PC-3 (cell line): ENCODE measurements at regions of chr6 and their contacts with region 1.

Region 1: GRCh38 chr6:113858480-113859348 is 1.6 kb downstream of the MARCKS start:
- DNase-seq: peak; percentile 87
- ATAC-seq: peak; percentile 72
- H3K4me3 ChIP-seq: peak overlapping the region; percentile 100
- H3K27ac ChIP-seq: peak overlapping the region; percentile 96
- H3K4me1 ChIP-seq: peaks cover 9% of the 10 kb centered on the region
- H3K27me3 ChIP-seq: no peaks in the 10 kb centered on the region
- CTCF ChIP-seq: peak; percentile 75

Region 2: DNA sequence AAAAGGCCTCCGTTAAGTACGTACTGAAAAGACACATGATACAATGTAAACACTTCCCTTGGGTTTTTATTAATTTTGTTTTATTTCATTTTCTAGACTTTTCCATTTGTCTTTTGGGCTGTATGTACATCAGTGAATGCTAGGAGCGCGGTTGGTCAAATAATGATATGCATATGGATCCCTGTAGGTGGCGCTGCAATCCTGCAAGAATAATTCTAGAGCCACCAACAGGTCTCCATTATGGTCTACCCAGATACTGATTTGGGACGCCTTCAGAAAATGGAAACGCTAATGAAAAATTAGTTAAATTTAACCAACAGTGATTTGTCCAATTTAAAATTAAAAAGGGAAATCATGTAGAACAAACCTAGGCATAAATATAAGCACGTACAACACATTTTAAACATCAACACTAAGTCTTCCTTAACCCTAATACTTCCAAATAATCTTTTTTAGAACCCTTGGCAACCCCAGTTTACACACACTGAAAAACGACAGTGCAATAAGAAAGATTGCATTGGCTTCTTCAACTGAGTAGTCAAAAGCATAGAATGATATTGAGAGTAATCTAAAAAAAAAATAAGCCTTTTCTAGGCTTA is 1078.1 kb before region 1 on chr6:
- CTCF ChIA-PET with region 1: no interaction called
- POLR2A ChIA-PET with region 1: no interaction called
- intact Hi-C with region 1: loop called (anchors 1 kb)
- DNase-seq: peak; percentile 79
- ATAC-seq: peak; percentile 85
- H3K4me3 ChIP-seq: no peak overlapping the region
- H3K27ac ChIP-seq: no peak overlapping the region
- H3K4me1 ChIP-seq: no peaks in the 10 kb centered on the region
- H3K27me3 ChIP-seq: no peaks in the 10 kb centered on the region
- CTCF ChIP-seq: peak; percentile 79

Region 3: GRCh38 chr6:113047148-113047547 is 811.6 kb before region 1 on chr6:
- CTCF ChIA-PET with region 1: no interaction called
- POLR2A ChIA-PET with region 1: no interaction called
- intact Hi-C with region 1: loop called (anchors 2 kb)
- DNase-seq: peak; percentile 79
- ATAC-seq: peak; percentile 90
- H3K4me3 ChIP-seq: no peak overlapping the region
- H3K27ac ChIP-seq: peak overlapping the region; percentile 83
- H3K4me1 ChIP-seq: peaks cover 44% of the 10 kb centered on the region
- H3K27me3 ChIP-seq: no peaks in the 10 kb centered on the region
- CTCF ChIP-seq: no peak

Region 4: GRCh38 chr6:113122060-113122459 is 736.7 kb before region 1 on chr6:
- CTCF ChIA-PET with region 1: interaction called, 3 read pairs
- POLR2A ChIA-PET with region 1: no interaction called
- intact Hi-C with region 1: loop called (anchors 5 kb)
- DNase-seq: peak; percentile 88
- ATAC-seq: peak; percentile 61
- H3K4me3 ChIP-seq: peak overlapping the region; percentile 2; the same call in 1 of the 2 replicates
- H3K27ac ChIP-seq: peak overlapping the region; percentile 66
- H3K4me1 ChIP-seq: peaks cover 33% of the 10 kb centered on the region
- H3K27me3 ChIP-seq: no peaks in the 10 kb centered on the region
- CTCF ChIP-seq: peak; percentile 44; the same call in 1 of the 2 replicates

Region 5: DNA sequence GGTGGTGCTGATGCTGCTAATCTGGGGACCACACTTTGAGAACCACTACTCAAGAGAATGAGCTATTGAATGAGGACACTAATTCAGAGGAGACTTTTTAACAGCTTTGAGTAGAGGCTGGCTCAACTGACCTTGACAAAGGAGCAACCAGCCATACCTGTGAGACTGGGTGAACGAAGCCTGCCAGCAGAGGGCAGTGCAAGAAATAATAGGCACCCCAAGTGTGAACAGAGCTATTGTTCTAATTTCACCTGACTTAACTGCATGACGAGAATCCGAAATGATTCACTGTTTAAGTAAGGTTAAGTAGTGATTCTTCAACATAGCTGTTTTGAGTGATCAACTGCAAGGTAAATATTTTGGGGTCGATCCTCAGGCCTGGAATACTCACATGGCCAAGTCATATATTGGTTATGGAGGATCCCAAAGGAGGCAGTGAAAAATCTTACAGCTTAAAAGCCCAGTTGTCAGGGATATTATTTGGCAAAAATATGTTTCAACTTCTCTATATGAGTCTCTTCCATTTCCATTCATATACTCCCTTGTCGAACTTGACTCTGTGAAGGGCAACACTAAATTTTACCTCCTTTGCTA is 552.1 kb before region 1 on chr6:
- CTCF ChIA-PET with region 1: no interaction called
- POLR2A ChIA-PET with region 1: no interaction called
- intact Hi-C with region 1: loop called (anchors 10 kb)
- DNase-seq: peak; percentile 68
- ATAC-seq: peak; percentile 64
- H3K4me3 ChIP-seq: no peak overlapping the region
- H3K27ac ChIP-seq: no peak overlapping the region
- H3K4me1 ChIP-seq: peaks cover 5% of the 10 kb centered on the region
- H3K27me3 ChIP-seq: no peaks in the 10 kb centered on the region
- CTCF ChIP-seq: peak; percentile 81

Region 6: GRCh38 chr6:113414511-113414910 is 444.2 kb before region 1 on chr6:
- CTCF ChIA-PET with region 1: interaction called, 4 read pairs
- POLR2A ChIA-PET with region 1: no interaction called
- intact Hi-C with region 1: loop called (anchors 2 kb)
- DNase-seq: peak; percentile 82
- ATAC-seq: peak; percentile 98
- H3K4me3 ChIP-seq: no peak overlapping the region
- H3K27ac ChIP-seq: no peak overlapping the region
- H3K4me1 ChIP-seq: peaks cover 24% of the 10 kb centered on the region
- H3K27me3 ChIP-seq: no peaks in the 10 kb centered on the region
- CTCF ChIP-seq: peak; percentile 64

Region 7: DNA sequence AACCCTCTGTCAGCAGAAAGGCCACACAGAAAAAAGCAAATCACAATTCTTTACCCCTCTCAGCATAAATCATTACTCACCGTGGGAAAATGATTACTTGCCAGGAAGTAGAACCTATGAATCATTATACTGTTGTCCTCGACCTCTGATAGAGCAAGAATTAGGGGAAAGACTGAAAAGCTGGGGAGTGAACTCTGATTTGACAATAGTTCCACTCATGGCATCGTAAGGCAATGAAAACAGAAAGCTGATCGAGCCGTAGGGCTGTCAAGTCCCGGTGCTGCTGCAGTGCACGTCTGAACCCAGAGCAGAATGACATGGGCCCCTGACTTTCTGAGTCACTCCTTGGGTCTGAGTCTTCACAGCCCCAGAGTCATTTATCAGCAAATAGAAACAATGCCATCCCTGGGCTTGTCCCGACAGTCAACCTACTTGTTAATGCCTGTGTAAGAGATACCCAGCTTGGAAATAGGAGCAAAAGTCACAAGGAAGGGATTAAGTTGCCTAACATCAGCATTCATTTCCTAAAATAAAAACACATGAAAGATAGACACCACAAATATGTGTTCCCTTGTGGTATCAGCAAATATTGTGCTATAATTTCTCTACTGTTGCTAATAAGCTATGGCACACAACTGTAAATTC is 226.4 kb before region 1 on chr6:
- CTCF ChIA-PET with region 1: interaction called, 3 read pairs
- POLR2A ChIA-PET with region 1: no interaction called
- intact Hi-C with region 1: loop called (anchors 2 kb)
- DNase-seq: peak; percentile 89
- ATAC-seq: peak; percentile 89
- H3K4me3 ChIP-seq: peak overlapping the region; percentile 60
- H3K27ac ChIP-seq: peak overlapping the region; percentile 97
- H3K4me1 ChIP-seq: peaks cover 39% of the 10 kb centered on the region
- H3K27me3 ChIP-seq: no peaks in the 10 kb centered on the region
- CTCF ChIP-seq: no peak